ENCODE measurements at regions of chr15 and their contacts with region 1.

Region 1: GRCh38 chr15:85707519-85708338 is 87.0 kb downstream of the KLHL25 start:
- DNase-seq: peak; percentile 47
- ATAC-seq: peak; percentile 13
- H3K4me3 Mint-ChIP-seq: peak overlapping the region; percentile 68
- H3K27ac Mint-ChIP-seq: peak overlapping the region; percentile 96
- H3K4me1 Mint-ChIP-seq: peaks cover 90% of the 10 kb centered on the region
- H3K27me3 Mint-ChIP-seq: no peaks in the 10 kb centered on the region

Region 2: DNA sequence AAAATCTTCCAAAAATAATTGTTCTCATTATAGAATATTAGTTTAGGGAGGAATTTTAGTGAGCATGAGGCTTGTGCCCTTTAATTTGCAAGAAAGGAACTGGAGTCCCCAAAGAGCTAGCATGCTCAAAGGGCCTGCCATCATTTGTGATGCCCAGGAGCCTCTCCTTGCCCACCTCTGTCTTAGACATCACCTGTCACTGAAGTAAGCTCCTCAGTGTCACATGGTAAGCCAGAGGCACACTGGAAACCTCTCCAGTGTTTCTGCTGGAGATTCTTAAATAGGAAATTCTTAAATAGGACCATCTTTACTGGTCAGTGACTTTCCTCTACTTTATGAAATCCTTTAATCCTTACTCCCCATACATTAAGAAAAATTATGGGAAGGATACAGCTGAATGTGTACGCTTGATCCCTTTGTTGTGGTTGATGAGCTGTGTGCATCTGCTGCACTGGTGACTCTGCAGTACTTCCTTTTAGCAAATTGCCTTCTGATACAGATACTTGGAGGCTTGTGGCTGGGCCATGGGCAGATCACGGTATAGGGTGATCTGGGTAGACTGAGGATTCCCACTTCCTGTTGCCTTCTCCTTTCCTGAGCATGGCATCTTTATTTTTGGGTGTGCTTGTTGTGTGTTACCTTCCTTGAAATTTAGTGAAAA is 110.4 kb before region 1 on chr15:
- CTCF ChIA-PET with region 1: no interaction called
- POLR2A ChIA-PET with region 1: no interaction called
- intact Hi-C with region 1: no loop called
- DNase-seq: peak; percentile 52
- ATAC-seq: peak; percentile 81
- H3K4me3 Mint-ChIP-seq: no peak overlapping the region
- H3K27ac Mint-ChIP-seq: peak overlapping the region; percentile 53
- H3K4me1 Mint-ChIP-seq: peaks cover 55% of the 10 kb centered on the region
- H3K27me3 Mint-ChIP-seq: no peaks in the 10 kb centered on the region

Region 3: DNA sequence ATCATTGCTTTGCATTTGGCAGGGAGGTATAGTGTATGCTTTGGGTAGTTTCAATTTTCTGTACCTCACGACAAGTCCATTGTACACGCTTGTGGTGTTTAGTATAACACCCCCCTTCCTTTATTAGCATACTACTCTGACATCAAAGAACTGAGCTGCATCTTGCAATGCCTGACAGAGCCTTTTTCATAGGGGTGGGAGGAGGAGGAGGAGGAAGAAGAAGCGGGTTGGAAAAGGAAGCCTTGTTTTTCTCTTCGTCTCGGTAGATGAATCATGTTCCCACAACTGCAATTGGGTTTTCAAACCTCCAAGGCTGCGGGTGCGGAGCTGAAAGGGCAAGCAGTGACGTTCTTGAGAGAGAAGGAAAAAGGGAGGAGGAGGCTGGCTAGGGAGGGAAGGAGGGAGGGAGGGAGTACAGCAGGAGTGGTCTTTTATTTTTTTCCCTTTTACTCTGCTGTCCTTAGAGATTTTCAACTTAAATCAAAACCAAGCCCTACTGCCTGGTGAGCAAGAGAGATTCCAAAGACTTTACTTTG is 88.7 kb before region 1 on chr15:
- CTCF ChIA-PET with region 1: interaction called, 4 read pairs
- POLR2A ChIA-PET with region 1: interaction called, 3 read pairs
- intact Hi-C with region 1: loop called (anchors 1 to 2 kb)
- DNase-seq: peak; percentile 78
- ATAC-seq: peak; percentile 90
- H3K4me3 Mint-ChIP-seq: no peak overlapping the region
- H3K27ac Mint-ChIP-seq: no peak overlapping the region
- H3K4me1 Mint-ChIP-seq: peaks cover 48% of the 10 kb centered on the region
- H3K27me3 Mint-ChIP-seq: no peaks in the 10 kb centered on the region

Region 4: DNA sequence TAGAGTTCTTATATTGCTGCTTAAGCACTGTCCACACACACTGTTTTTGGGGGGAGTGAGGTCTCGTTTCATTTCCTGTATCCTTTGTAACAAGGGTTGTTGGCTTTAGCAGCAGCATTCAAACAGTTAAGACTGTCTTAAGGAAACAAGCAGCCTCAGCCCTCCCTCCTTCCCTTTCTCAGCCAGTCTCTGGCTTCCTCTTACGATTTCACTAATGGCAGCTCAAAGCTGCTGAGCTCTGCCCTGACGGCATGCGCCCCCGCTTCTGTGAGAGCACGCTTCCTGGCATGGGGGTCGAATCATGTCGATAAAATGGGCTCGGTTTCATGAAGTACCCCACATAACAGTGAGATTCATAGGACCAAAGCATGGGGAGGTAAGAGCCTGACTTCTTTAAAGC is 18.0 kb before region 1 on chr15:
- CTCF ChIA-PET with region 1: interaction called, 50 read pairs
- POLR2A ChIA-PET with region 1: interaction called, 31 read pairs
- intact Hi-C with region 1: loop called (anchors 1 kb)
- DNase-seq: peak; percentile 75
- ATAC-seq: peak; percentile 52
- H3K4me3 Mint-ChIP-seq: peak overlapping the region; percentile 78
- H3K27ac Mint-ChIP-seq: peak overlapping the region; percentile 98
- H3K4me1 Mint-ChIP-seq: peaks cover 77% of the 10 kb centered on the region
- H3K27me3 Mint-ChIP-seq: no peaks in the 10 kb centered on the region

Region 5: DNA sequence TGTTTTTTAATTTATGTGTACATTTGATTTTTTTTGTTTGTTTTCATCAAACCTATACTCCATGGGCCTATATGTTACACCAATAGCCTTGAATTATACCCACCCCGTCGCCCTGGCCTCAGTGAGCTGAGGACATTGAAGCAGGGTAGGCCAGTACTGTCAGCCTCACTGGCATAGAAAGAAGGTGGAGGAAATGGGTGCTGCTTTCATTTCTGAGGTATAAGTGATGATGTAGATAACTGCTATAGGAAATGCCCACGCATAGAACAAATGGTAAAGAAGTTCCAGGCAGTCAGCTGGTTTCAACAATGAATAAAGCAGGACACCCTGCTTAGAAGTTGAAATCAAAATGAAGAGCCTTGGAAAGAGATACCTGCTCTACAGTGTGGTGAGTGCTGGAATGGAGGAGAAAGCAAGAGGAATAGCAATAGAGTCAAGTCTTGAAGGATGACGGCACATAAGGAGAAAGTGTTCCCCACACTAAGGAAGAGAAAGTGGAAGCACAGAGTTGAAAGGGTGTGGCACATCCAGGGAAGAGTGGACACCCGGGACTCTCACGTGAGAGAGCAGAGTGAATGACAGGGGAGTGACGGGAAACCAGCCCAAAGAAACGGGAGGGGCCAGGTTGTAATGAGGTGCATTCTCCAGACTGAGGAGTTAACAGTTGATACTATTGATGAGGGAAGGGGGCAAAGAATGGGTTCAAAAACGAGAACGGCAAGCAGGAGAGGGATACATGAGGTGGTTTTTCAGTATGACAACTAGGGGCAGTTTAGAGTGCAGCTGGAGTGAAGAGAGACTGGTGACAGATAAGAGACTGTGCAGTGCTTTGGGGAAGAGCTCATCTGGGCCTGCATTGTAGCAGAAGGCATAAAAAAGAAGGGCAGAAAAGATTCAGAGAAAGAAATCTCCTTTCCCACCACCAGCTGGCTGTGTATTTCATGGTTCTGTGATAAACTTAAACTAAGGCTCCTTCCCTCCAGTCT is 16.5 kb after region 1 on chr15:
- CTCF ChIA-PET with region 1: interaction called, 15 read pairs
- POLR2A ChIA-PET with region 1: interaction called, 9 read pairs
- intact Hi-C with region 1: loop called (anchors 1 kb)
- DNase-seq: peak; percentile 45
- ATAC-seq: peak; percentile 82
- H3K4me3 Mint-ChIP-seq: peak overlapping the region; percentile 50
- H3K27ac Mint-ChIP-seq: peak overlapping the region; percentile 98
- H3K4me1 Mint-ChIP-seq: peaks cover 68% of the 10 kb centered on the region
- H3K27me3 Mint-ChIP-seq: no peaks in the 10 kb centered on the region

Region 6: GRCh38 chr15:85920956-85921355 is 213.2 kb after region 1 on chr15:
- CTCF ChIA-PET with region 1: no interaction called
- POLR2A ChIA-PET with region 1: no interaction called
- intact Hi-C with region 1: no loop called
- DNase-seq: no peak
- ATAC-seq: no peak
- H3K4me3 Mint-ChIP-seq: no peak overlapping the region
- H3K27ac Mint-ChIP-seq: no peak overlapping the region
- H3K4me1 Mint-ChIP-seq: peaks cover 4% of the 10 kb centered on the region
- H3K27me3 Mint-ChIP-seq: peaks cover 7% of the 10 kb centered on the region

Measured in activated CD4-positive, alpha-beta T cell treated with anti-CD3 and anti-CD28 coated beads for 36 hours (primary cell).